CD8-positive, alpha-beta T cell (primary cell): ENCODE measurements at regions of chr18 and their contacts with region 1.

Region 1: GRCh38 chr18:36887114-36887513 is 58.2 kb downstream of the KIAA1328 start:
- DNase-seq: no peak
- ATAC-seq: no peak
- H3K4me3 ChIP-seq: no peak overlapping the region
- H3K4me3 Mint-ChIP-seq: no peak overlapping the region
- H3K27ac ChIP-seq: no peak overlapping the region
- H3K27ac Mint-ChIP-seq: no peak overlapping the region
- H3K4me1 ChIP-seq: no peaks in the 10 kb centered on the region
- H3K4me1 Mint-ChIP-seq: no peaks in the 10 kb centered on the region
- H3K27me3 ChIP-seq: no peaks in the 10 kb centered on the region
- H3K27me3 Mint-ChIP-seq: no peaks in the 10 kb centered on the region
- CTCF ChIP-seq: no peak

Region 2: GRCh38 chr18:36917907-36918306 is 30.8 kb after region 1 on chr18:
- CTCF ChIA-PET with region 1: no interaction called
- POLR2A ChIA-PET with region 1: no interaction called
- intact Hi-C with region 1: loop called in 1 of 2 experiments (anchors 1 kb)
- DNase-seq: no peak
- ATAC-seq: no peak
- H3K4me3 ChIP-seq: no peak overlapping the region
- H3K4me3 Mint-ChIP-seq: no peak overlapping the region
- H3K27ac ChIP-seq: no peak overlapping the region
- H3K27ac Mint-ChIP-seq: no peak overlapping the region
- H3K4me1 ChIP-seq: peaks cover 6% of the 10 kb centered on the region
- H3K4me1 Mint-ChIP-seq: peaks cover 12% of the 10 kb centered on the region
- H3K27me3 ChIP-seq: no peaks in the 10 kb centered on the region
- H3K27me3 Mint-ChIP-seq: no peaks in the 10 kb centered on the region
- CTCF ChIP-seq: no peak